Activated naive CD4-positive, alpha-beta T cell treated with anti-CD3 and anti-CD28 coated beads, Interleukin-2, amount 10 ng/mL, durations not matched to agents 7 days and 5 days (primary cell): ENCODE measurements at regions of chr11 and their contacts with region 1.

Region 1: DNA sequence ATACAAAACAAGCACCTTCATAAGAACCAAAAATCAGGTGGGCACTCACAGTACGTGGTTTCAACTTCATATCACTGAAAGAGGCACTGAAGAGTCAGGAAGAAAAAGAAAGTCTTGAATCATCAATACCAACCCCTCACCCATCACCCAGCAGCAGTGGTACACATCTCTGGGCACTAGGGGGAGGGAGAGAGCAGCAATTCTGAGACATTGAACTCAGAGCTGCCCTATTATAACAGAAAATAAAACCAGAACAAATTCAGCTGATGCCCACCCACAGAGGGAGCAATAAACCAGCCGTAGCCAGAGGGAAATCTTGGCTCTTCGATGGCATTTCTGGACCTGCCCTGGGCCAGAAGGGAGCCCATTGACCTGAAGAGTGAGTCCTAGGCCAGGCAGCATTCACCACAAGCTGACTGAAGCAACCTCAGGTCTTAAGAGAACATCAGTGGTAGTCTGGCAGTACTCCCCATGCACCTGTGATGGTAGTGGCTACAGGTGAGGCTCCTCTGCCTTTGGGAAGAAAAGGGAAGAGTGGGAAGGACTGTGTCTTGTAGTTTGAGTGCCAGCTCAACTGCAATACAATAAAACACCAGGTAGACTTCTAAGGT is 42.2 kb upstream of the FAM181B start:
- DNase-seq: peak; percentile 71
- H3K4me3 Mint-ChIP-seq: no peak overlapping the region
- H3K27ac Mint-ChIP-seq: no peak overlapping the region
- H3K4me1 Mint-ChIP-seq: no peaks in the 10 kb centered on the region
- H3K27me3 Mint-ChIP-seq: peaks cover 12% of the 10 kb centered on the region

Region 2: DNA sequence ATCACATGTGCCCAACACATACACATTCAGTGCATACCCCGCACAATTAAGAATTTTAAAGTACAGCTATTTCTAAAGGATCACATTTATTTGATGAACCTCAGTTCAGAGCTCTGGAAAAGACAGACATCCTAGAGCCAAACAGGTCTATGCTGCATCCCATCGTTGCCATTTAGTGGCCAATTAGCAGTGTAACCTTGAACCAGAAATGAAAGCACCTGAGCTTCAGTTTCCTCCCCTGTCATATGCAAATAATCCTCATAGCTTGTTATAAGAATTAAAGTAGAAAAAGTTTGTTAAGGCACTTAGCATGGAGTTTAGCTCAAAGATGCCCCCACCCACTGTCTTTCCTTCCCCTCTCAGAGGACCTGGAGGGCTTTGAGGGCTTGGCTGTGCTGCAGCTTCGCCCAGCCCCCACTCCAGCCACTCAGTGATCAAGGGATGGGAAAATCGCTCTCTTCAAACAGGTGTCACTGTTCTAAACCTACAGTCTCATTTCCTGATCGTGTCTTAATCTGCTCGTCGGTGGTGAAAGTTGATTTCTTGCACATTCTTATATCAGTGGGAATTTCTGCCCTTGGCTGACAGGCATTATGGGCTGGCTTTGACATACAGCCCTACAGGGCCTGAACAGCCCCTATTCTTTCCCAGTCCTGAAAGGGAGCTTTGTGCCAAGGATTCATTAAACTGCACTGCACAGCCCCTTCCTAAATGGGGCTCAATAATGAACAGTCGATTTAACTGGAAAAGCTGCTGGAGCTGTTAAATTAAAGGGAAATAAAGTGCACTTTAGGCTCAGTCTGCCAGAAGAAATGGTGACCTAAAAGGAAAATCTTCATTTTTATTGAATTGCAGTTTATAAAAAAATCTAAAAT is 18.8 kb before region 1 on chr11:
- CTCF ChIA-PET with region 1: interaction called, 11 read pairs
- DNase-seq: peak; percentile 38
- H3K4me3 Mint-ChIP-seq: peak overlapping the region; percentile 54
- H3K27ac Mint-ChIP-seq: peak overlapping the region; percentile 80
- H3K4me1 Mint-ChIP-seq: peaks cover 28% of the 10 kb centered on the region
- H3K27me3 Mint-ChIP-seq: peaks cover 13% of the 10 kb centered on the region

Region 3: GRCh38 chr11:82765466-82766034 is 10.3 kb before region 1 on chr11:
- CTCF ChIA-PET with region 1: interaction called, 18 read pairs
- DNase-seq: peak; percentile 55
- H3K4me3 Mint-ChIP-seq: no peak overlapping the region
- H3K27ac Mint-ChIP-seq: peak overlapping the region; percentile 20
- H3K4me1 Mint-ChIP-seq: peaks cover 24% of the 10 kb centered on the region
- H3K27me3 Mint-ChIP-seq: peaks cover 4% of the 10 kb centered on the region

Region 4: GRCh38 chr11:82790723-82791484 is 15.1 kb after region 1 on chr11:
- CTCF ChIA-PET with region 1: interaction called, 15 read pairs
- DNase-seq: no peak
- H3K4me3 Mint-ChIP-seq: no peak overlapping the region
- H3K27ac Mint-ChIP-seq: no peak overlapping the region
- H3K4me1 Mint-ChIP-seq: no peaks in the 10 kb centered on the region
- H3K27me3 Mint-ChIP-seq: no peaks in the 10 kb centered on the region